ENCODE measurements at regions of chr2 and their contacts with region 1.

Region 1: GRCh38 chr2:182824767-182825158 is 41.7 kb downstream of the FRZB start:
- DNase-seq: no peak
- ATAC-seq: no peak
- H3K4me3 ChIP-seq: no peak overlapping the region
- H3K27ac ChIP-seq: no peak overlapping the region
- H3K4me1 ChIP-seq: no peaks in the 10 kb centered on the region
- H3K27me3 ChIP-seq: peaks cover 12% of the 10 kb centered on the region; the same call in 1 of the 2 replicates
- CTCF ChIP-seq: no peak

Region 2: DNA sequence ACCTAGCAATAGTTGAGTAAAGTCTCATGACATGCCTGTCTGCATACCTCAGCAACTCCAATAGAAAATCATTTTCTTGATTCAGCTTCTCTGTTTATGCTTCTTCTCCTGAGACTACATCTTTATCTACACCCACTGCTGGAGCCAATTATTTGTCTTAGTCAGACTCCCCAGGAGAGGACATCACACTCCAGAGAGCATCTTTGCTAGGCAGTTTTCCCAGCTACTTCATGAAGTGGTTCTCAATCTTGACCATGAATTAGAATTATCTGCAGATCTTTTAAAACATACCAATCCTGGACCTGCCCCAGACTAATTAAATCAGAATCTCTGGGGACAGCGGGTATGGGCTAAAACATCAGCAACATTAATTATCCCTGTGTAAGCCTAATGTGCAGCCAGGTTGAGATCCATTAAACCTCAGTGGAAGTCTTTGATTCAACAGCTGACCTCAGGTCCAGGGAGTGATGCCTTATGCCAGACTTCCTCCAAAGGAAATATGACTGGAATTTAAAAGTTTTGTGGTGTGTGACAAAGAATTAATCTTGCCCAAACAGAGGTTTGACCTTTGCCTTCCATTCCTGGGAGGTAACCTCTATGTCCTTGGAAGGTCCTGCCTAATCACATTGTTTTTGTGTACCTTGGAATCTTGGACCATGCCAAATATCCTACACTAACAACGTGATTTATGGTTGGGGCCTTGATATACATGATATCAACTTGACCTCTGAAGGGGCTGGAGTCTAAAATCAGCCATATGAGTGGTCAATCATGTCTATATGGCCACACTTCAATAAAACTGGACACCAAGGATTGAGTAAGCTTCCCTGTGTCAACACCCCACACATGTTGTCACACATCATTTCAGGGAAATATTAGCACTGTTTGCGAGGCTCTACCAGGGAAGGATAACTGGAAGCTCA is 208.0 kb before region 1 on chr2:
- CTCF ChIA-PET with region 1: no interaction called
- POLR2A ChIA-PET with region 1: no interaction called
- intact Hi-C with region 1: no loop called
- DNase-seq: no peak
- ATAC-seq: no peak
- H3K4me3 ChIP-seq: no peak overlapping the region
- H3K27ac ChIP-seq: no peak overlapping the region
- H3K4me1 ChIP-seq: no peaks in the 10 kb centered on the region
- H3K27me3 ChIP-seq: no peaks in the 10 kb centered on the region; the same call in 1 of the 2 replicates
- CTCF ChIP-seq: no peak

Region 3: GRCh38 chr2:182845794-182846417 is 21.1 kb after region 1 on chr2:
- CTCF ChIA-PET with region 1: interaction called, 17 read pairs
- POLR2A ChIA-PET with region 1: no interaction called
- intact Hi-C with region 1: no loop called
- DNase-seq: no peak
- ATAC-seq: peak; percentile 54
- H3K4me3 ChIP-seq: no peak overlapping the region
- H3K27ac ChIP-seq: no peak overlapping the region
- H3K4me1 ChIP-seq: no peaks in the 10 kb centered on the region
- H3K27me3 ChIP-seq: peaks cover 18% of the 10 kb centered on the region
- CTCF ChIP-seq: no peak

Measured in PC-3 (cell line).